T-cell (primary cell): ENCODE measurements at regions of chr1 and their contacts with region 1.

Region 1: DNA sequence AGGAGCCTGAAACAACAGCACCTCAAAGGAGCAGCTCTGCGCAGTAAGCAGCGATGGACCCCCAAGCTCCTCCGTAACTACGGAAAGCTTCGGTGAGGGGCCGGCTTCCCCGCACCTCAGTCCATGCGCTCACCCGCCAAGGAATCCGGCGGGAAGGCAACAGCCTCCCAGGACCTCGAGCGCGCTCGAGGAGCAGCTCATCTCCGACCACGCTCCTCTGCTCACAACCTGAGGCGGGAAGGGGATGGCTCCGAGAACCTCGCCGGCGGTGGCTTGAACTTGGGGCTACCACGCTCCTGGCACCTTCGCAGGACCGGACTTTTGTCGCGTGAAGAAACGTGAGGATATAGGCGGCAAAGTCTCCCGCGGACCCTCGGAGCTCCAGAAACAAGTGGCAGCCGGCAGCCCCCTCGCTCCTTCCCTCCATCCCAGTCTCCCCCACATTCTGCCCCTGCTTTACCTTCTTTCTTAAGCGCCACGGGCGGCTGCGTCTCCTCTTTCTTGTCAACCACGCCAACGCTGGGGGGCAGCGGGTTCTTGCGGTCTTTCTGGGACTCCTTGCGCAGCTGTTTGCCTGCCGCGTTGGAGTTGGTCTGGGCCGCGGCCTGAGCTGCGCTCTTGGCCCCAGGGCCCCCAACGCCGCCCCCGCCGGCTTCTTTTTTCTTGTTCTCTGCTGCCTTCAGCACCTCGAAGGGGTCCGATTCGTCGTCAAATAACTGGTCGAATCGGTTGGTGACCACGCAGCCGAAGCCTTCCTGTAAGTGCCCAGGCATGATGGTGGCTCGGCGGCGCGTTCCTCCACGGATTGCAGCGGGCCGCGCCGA is 462 bp downstream of the SERBP1 start:
- DNase-seq: peak in 26 of 35 experiments; percentile 2 to 44 (median 14)
- ATAC-seq: peak in 3 of 4 experiments; percentile 4 to 10 (median 6)
- H3K4me3 ChIP-seq: peak overlapping the region; percentile 96
- H3K4me3 Mint-ChIP-seq: peak overlapping the region; percentile 91 to 100 (median 98)
- H3K27ac ChIP-seq: peak overlapping the region; percentile 96
- H3K27ac Mint-ChIP-seq: peak overlapping the region; percentile 96 to 99
- H3K4me1 ChIP-seq: peaks cover 11 to 35% of the 10 kb centered on the region in 2 experiments
- H3K4me1 Mint-ChIP-seq: peaks cover 53 to 78% (median 60%) of the 10 kb centered on the region in 3 donors
- H3K27me3 ChIP-seq: no peaks in the 10 kb centered on the region
- H3K27me3 Mint-ChIP-seq: no peaks in the 10 kb centered on the region

Region 2: DNA sequence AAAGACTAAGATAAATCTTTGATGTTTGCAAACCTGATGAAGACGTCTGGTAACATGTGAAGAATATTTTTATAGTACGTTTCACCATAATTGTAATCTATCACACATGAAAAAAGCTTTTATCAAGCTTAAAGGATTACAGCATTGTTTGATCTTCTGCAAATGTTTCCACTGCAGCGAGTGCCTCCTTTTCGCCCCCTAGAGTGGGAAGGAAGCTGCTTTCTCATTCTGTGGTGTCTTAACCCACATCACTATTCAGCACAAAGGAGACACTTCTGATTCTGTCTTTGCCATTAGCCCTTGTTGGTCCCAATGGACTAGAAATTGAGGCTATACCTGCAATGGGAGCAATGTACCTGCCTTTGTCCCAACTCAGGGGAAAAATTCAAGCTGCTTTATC is 168.1 kb before region 1 on chr1:
- CTCF ChIA-PET with region 1: no interaction called
- POLR2A ChIA-PET with region 1: no interaction called
- DNase-seq: peak in 28 of 35 experiments; percentile 0 to 52 (median 24)
- ATAC-seq: peak in 3 of 4 experiments; percentile 81 to 95 (median 82)
- H3K4me3 ChIP-seq: no peak overlapping the region
- H3K4me3 Mint-ChIP-seq: peak overlapping the region in 1 of 3 donors; percentile 10
- H3K27ac ChIP-seq: no peak overlapping the region
- H3K27ac Mint-ChIP-seq: no peak overlapping the region
- H3K4me1 ChIP-seq: peaks cover 8 to 24% of the 10 kb centered on the region in 2 experiments
- H3K4me1 Mint-ChIP-seq: peaks cover 28 to 36% (median 30%) of the 10 kb centered on the region in 3 donors
- H3K27me3 ChIP-seq: no peaks in the 10 kb centered on the region
- H3K27me3 Mint-ChIP-seq: no peaks in the 10 kb centered on the region

Region 3: GRCh38 chr1:67414574-67414973 is 15.2 kb before region 1 on chr1:
- CTCF ChIA-PET with region 1: interaction called in 1 of 2 experiments, 4 read pairs
- POLR2A ChIA-PET with region 1: interaction called, 4 to 10 read pairs
- DNase-seq: no peak
- ATAC-seq: no peak
- H3K4me3 ChIP-seq: no peak overlapping the region
- H3K4me3 Mint-ChIP-seq: no peak overlapping the region
- H3K27ac ChIP-seq: no peak overlapping the region
- H3K27ac Mint-ChIP-seq: peak overlapping the region in 1 of 2 donors; percentile 16
- H3K4me1 ChIP-seq: peaks cover 5 to 8% of the 10 kb centered on the region in 2 experiments
- H3K4me1 Mint-ChIP-seq: peaks cover 29 to 46% (median 45%) of the 10 kb centered on the region in 3 donors
- H3K27me3 ChIP-seq: no peaks in the 10 kb centered on the region
- H3K27me3 Mint-ChIP-seq: no peaks in the 10 kb centered on the region

Region 4: GRCh38 chr1:67484492-67484891 is 54.8 kb after region 1 on chr1:
- CTCF ChIA-PET with region 1: no interaction called
- POLR2A ChIA-PET with region 1: no interaction called
- DNase-seq: no peak
- ATAC-seq: no peak
- H3K4me3 ChIP-seq: no peak overlapping the region
- H3K4me3 Mint-ChIP-seq: no peak overlapping the region
- H3K27ac ChIP-seq: no peak overlapping the region
- H3K27ac Mint-ChIP-seq: no peak overlapping the region
- H3K4me1 ChIP-seq: no peaks in the 10 kb centered on the region
- H3K4me1 Mint-ChIP-seq: no peaks in the 10 kb centered on the region
- H3K27me3 ChIP-seq: no peaks in the 10 kb centered on the region
- H3K27me3 Mint-ChIP-seq: no peaks in the 10 kb centered on the region

Region 5: GRCh38 chr1:67614511-67614934 is 184.8 kb after region 1 on chr1:
- CTCF ChIA-PET with region 1: no interaction called
- POLR2A ChIA-PET with region 1: no interaction called
- DNase-seq: no peak
- ATAC-seq: no peak
- H3K4me3 ChIP-seq: no peak overlapping the region
- H3K4me3 Mint-ChIP-seq: no peak overlapping the region
- H3K27ac ChIP-seq: no peak overlapping the region
- H3K27ac Mint-ChIP-seq: no peak overlapping the region
- H3K4me1 ChIP-seq: no peaks in the 10 kb centered on the region
- H3K4me1 Mint-ChIP-seq: no peaks in the 10 kb centered on the region
- H3K27me3 ChIP-seq: peaks cover 0 to 16% of the 10 kb centered on the region in 2 experiments
- H3K27me3 Mint-ChIP-seq: peaks cover 10 to 27% of the 10 kb centered on the region in 2 donors

Region 6: DNA sequence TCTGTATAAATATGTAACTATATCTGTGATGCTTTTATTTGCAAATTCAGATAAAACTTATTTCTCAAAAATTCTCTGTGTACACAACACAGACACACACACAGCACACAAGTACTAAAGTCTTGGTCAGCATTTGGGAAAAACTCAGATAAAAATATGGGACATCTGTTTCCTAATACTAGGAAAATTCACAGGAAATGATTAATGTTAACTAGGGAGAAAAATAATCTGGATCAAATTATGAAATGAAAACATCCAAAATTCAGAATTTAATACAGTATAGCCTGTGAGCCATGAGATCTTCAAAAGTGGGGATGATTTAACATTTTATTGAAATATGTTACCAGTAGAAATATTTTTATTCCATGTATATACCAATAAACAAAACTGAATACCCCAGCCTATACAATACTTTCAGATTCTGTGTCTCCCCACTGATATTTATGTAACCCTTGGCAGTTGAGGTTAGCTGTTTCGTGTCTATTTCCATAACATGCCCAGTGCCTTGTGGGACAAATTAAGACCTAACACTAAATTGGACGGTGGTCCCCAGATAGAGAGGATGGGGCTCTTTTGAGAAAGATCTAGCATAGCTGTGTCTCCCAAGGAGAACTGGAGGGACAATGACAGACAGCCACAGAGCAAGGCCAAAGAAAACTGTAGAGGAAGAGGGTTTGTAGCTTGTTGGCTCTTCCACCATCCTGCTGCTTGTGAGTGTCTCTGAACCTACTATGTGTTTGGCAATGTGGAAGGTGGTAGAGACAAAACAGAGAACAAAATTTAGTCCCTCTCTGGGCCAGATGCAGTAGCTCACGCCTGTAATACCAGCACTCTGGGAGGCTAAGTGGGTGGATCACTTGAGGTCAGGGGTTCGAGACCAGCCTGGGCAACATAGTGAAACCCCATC is 356.4 kb after region 1 on chr1:
- CTCF ChIA-PET with region 1: no interaction called
- POLR2A ChIA-PET with region 1: no interaction called
- DNase-seq: no peak
- ATAC-seq: no peak
- H3K4me3 ChIP-seq: no peak overlapping the region
- H3K4me3 Mint-ChIP-seq: no peak overlapping the region
- H3K27ac ChIP-seq: no peak overlapping the region
- H3K27ac Mint-ChIP-seq: no peak overlapping the region
- H3K4me1 ChIP-seq: no peaks in the 10 kb centered on the region
- H3K4me1 Mint-ChIP-seq: no peaks in the 10 kb centered on the region
- H3K27me3 ChIP-seq: peaks cover 0 to 2% of the 10 kb centered on the region in 2 experiments
- H3K27me3 Mint-ChIP-seq: peaks cover 3 to 7% of the 10 kb centered on the region in 2 donors